PC-3 (cell line): ENCODE measurements at regions of chr4 and their contacts with region 1.

Region 1: DNA sequence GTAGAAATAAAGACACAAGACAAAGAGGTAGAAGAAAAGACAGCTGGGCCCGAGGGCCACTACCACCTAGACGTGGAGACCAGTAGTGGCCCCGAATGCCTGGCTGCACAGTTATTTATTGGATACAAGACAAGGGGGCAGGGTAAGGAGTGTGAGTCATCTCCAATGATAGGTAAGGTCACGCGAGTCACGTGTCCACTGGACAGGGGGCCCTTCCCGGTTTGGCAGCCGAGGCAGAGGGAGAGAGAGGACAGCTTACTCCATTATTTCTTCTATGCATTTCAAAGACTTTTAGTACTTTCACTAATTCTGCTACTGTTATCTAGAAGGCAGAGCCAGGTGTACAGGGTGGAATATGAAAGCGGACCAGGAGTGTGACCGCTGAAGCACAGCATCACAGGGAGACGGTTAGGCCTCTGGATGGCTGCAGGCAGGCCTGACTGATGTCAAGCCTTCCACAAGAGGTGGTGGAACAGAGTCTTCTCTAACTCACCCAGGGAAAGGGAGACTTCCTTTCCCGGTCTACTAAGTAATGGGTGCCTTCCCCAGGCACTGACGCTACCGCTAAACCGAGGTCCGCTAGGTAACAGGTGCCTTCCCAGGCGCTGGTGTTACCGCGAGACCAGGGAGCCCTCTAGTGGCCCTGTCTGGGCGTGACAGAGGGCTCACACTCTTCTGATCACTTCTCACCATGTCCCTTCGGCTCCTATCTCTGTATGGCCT is 44.9 kb downstream of the ZBTB49 start:
- DNase-seq: peak; percentile 71
- ATAC-seq: peak; percentile 93
- H3K4me3 ChIP-seq: no peak overlapping the region
- H3K27ac ChIP-seq: no peak overlapping the region
- H3K4me1 ChIP-seq: no peaks in the 10 kb centered on the region
- H3K27me3 ChIP-seq: no peaks in the 10 kb centered on the region
- CTCF ChIP-seq: peak; percentile 65

Region 2: GRCh38 chr4:3791978-3792542 is 542.9 kb before region 1 on chr4:
- CTCF ChIA-PET with region 1: no interaction called
- POLR2A ChIA-PET with region 1: no interaction called
- intact Hi-C with region 1: no loop called
- DNase-seq: peak; percentile 45
- ATAC-seq: no peak
- H3K4me3 ChIP-seq: no peak overlapping the region
- H3K27ac ChIP-seq: no peak overlapping the region
- H3K4me1 ChIP-seq: no peaks in the 10 kb centered on the region
- H3K27me3 ChIP-seq: no peaks in the 10 kb centered on the region
- CTCF ChIP-seq: no peak

Region 3: DNA sequence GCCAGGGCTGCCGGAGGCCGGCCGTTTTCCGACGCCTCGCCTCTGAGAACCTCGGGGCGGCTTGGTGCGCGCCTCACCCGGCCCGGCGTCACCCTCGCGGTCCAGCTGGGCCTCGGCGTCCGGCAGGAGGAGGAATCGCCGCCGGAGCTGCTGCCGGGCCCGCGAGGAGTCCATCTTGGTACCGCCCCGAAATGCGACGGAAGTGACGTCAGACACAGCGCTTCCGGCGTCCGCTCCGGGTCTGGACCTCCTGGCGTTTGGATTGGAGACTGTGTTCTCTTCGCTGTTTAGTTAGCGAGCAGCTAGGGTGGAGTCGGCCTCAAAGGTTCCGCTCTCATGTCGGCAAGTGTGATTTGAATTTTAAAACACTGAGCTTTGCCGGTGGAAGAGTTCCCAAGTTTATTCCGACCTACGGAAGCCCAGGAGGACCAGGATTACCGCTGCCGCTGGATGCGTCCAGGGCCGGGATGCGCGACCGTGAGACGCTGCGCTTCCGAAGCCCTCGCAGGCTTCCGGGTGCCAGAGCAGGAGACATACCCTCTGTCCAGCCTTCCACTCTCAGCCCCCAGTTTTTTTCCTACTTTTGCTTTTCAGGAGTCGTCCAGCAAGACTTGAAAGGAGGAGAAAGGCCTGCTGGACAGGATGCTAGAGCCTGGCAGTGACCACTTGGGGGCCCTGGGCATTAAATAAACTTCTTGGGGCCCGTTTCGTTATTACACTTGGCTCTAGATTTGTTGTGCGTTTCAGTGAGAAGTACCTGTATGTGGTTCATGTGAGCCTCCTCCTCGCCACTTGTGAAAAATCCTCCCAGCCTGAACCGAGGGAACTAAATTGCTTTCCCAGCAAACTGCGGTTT is 86.7 kb before region 1 on chr4 and contains the start of gene TMEM128:
- CTCF ChIA-PET with region 1: no interaction called
- POLR2A ChIA-PET with region 1: no interaction called
- intact Hi-C with region 1: loop called (anchors 2 kb)
- DNase-seq: peak; percentile 88
- ATAC-seq: peak; percentile 94
- H3K4me3 ChIP-seq: peak within 1 kb of the TSS; percentile 94
- H3K27ac ChIP-seq: peak within 1 kb of the TSS; percentile 76
- H3K4me1 ChIP-seq: peaks cover 13% of the 10 kb centered on the region
- H3K27me3 ChIP-seq: no peaks in the 10 kb centered on the region
- CTCF ChIP-seq: no peak
- total RNA-seq, gene TMEM128: 4.7 and 10.1 TPM in 2 replicates

Region 4: GRCh38 chr4:4260253-4260652 is 74.7 kb before region 1 on chr4:
- CTCF ChIA-PET with region 1: no interaction called
- POLR2A ChIA-PET with region 1: no interaction called
- intact Hi-C with region 1: loop called (anchors 1 kb)
- DNase-seq: peak; percentile 74
- ATAC-seq: peak; percentile 93
- H3K4me3 ChIP-seq: no peak overlapping the region
- H3K27ac ChIP-seq: no peak overlapping the region
- H3K4me1 ChIP-seq: peaks cover 5% of the 10 kb centered on the region; the same call in 1 of the 2 replicates
- H3K27me3 ChIP-seq: 0 out of 2 replicates have a peak, but pooled peaks cover 6% of the 10 kb centered on the region
- CTCF ChIP-seq: peak; percentile 71